AG04450 (cell line): ENCODE measurements at regions of chr6 and their contacts with region 1.

Region 1: DNA sequence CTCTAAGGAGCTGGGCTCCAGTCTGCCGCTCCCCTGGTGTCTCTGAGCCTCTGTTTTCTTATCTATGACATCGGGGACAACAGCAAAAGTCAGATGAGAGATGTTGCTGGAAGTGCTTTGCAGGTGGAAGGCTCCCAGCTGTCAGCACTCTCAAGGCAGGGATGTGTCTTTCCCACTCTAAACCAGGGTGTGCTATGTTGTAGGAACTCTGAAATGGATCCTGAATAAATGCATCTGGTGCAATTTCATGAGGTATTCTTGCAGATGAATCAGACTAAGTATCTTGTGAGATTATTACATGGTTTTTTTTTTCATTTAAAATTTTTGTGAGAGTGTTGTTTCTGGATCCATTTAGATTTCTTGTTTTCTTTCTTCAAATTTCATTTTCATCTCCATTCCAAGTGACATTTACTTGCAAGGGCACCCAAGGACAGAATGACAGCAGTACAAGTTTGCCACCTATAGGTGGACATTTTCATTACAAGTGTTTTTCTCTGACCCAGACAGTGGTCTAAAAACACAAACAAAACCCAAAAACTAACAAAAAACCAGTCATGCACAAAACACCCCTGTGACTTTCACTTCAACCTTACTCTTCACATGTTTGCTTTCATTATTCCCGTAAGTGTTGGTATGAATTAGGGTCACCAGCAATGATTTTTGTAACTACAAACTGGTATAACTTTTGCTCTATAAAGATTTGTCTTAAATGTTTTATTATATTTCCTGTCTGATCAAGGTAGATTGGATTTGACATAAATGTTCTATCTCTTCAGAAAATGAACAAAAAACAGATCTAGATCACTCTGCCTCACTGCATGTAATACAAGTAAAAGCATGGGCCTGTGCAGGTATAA is 14.7 kb upstream of the SIM1 start:
- DNase-seq: no peak
- H3K4me3 ChIP-seq: no peak overlapping the region
- H3K27ac ChIP-seq: no peak overlapping the region
- H3K27me3 ChIP-seq: peaks cover 12% of the 10 kb centered on the region
- CTCF ChIP-seq: peak; percentile 78

Region 2: GRCh38 chr6:100088009-100088408 is 391.4 kb before region 1 on chr6:
- CTCF ChIA-PET with region 1: no interaction called
- POLR2A ChIA-PET with region 1: no interaction called
- DNase-seq: peak; percentile 4
- H3K4me3 ChIP-seq: no peak overlapping the region
- H3K27ac ChIP-seq: no peak overlapping the region
- H3K27me3 ChIP-seq: no peaks in the 10 kb centered on the region
- CTCF ChIP-seq: no peak

Region 3: DNA sequence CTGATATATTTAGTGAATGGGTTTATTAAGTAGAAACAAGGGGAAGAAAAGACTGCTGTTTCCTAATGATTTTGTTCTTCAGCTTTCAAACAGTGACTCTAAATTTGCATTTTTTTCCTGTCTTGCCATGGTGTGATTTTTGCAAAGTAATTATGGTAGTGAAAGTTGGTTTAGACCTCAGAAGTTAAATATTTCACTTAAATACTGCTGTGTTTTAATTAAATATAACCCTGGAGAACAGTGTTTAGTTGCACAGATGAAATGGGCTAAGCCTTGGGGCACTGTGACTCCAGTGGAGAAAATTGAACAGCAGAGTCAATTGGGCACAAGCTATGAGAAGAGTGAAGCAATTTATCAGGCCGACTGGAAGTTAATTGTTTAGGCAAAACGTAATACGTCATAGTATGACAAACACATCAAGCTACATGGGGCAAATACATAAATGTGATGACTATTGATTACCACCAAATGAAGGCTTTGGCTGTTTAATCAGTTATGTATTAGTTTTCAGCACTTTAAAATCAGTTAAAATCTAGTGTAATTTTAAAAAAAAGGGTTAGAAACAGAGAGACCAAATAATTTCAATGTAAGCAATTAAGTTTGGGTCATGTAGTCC is 374.2 kb before region 1 on chr6:
- CTCF ChIA-PET with region 1: interaction called, 18 read pairs
- POLR2A ChIA-PET with region 1: no interaction called
- DNase-seq: no peak
- H3K4me3 ChIP-seq: no peak overlapping the region
- H3K27ac ChIP-seq: no peak overlapping the region
- H3K27me3 ChIP-seq: peaks cover 13% of the 10 kb centered on the region
- CTCF ChIP-seq: no peak

Region 4: DNA sequence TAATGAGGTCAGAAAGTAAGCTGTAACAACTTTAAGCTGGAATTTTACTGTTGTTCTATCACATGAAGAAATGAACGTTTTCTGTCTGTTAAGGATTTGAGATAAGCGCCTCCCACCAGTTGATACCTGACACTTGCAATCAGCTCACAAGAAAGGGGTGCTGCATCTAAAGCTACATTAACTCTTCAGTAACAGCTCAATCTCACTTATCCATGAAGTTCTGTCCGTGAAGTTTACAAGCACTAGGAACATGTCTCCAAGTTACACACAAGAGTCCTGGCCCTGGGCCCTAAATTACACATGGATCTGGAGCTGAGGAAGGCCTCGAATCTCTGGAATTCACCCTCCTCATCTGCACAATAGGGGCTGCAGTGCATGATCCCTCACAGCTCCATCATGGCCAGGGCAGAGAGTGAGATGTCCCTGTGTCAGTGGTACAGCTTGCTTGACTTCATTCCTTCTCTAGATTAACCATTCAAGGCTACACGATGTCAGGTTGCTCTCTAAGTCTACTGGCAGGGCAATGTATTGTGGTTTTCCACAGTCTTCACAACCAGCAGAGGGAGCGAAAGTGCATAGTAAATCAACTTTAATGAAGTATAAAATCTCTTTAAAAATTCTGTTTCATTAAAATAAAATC is 303.0 kb before region 1 on chr6:
- CTCF ChIA-PET with region 1: interaction called, 21 read pairs
- POLR2A ChIA-PET with region 1: no interaction called
- DNase-seq: peak; percentile 27
- H3K4me3 ChIP-seq: no peak overlapping the region; the same call in 1 of the 2 replicates
- H3K27ac ChIP-seq: peak overlapping the region; percentile 80
- H3K27me3 ChIP-seq: no peaks in the 10 kb centered on the region
- CTCF ChIP-seq: peak; percentile 70

Region 5: GRCh38 chr6:100704961-100705360 is 225.6 kb after region 1 on chr6:
- CTCF ChIA-PET with region 1: no interaction called
- POLR2A ChIA-PET with region 1: no interaction called
- DNase-seq: no peak
- H3K4me3 ChIP-seq: no peak overlapping the region
- H3K27ac ChIP-seq: no peak overlapping the region
- H3K27me3 ChIP-seq: no peaks in the 10 kb centered on the region
- CTCF ChIP-seq: no peak